ENCODE measurements at regions of chr17 and their contacts with region 1.

Region 1: DNA sequence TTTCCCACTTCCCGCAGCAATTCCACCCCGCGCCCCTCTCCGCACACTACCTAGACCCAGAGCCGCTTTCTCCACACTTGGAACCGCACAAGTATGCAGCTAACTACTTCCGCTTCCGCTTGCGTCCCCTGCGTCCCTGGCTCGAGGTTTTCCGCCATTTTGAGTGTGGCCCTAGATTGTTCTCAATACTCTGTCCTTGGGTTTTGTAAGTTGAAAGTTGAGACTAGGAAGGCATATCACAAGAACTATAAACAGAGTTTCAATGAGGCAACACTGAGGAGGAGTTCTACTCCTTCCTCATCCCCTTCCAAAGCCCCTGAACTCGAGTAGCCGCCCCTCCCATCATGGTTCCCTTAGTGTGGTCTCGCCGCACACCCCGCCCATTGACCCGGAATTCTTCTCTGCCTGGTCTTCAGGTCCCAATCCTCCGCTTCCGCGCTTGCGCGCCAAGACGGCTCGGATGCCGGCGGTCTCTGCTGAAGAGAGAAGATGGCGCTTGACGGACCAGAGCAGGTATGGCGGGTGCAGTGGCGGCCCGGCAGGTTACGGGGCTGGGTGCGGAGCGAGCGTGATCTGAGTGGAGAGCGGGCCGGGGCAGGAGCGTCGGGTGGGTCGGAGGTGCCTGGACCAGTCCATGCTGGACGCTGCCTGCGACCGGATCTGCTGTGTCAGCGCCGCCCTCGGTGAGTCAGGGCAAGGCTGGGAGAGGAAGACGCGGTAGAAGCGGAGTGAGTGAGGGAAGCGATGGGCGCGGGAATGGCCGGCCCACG is at the starts of genes FTSJ3 and PSMC5:
- DNase-seq: peak; percentile 93
- CTCF ChIP-seq: peak; percentile 72

Region 2: DNA sequence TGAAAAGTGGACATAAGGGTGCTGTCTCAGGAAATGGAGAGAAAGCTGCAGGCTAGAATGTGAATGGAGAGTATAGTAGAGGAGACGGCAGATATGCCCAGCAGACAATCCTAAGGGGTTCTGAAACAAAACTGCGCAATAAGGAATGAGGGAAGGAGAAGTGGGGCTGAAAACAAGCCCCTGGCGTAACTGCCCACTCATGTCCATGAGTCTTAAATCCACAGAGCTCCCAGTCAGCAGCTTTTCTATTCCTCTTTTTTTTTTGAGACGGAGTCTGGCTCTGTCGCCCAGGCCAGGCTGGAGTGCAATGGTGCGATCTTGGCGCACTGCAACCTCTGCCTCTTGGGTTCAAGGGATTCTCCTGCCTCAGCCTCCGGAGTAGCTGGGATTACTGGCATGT is 91.5 kb before region 1 on chr17:
- CTCF ChIA-PET with region 1: no interaction called
- POLR2A ChIA-PET with region 1: no interaction called
- DNase-seq: no peak
- CTCF ChIP-seq: no peak

Region 3: DNA sequence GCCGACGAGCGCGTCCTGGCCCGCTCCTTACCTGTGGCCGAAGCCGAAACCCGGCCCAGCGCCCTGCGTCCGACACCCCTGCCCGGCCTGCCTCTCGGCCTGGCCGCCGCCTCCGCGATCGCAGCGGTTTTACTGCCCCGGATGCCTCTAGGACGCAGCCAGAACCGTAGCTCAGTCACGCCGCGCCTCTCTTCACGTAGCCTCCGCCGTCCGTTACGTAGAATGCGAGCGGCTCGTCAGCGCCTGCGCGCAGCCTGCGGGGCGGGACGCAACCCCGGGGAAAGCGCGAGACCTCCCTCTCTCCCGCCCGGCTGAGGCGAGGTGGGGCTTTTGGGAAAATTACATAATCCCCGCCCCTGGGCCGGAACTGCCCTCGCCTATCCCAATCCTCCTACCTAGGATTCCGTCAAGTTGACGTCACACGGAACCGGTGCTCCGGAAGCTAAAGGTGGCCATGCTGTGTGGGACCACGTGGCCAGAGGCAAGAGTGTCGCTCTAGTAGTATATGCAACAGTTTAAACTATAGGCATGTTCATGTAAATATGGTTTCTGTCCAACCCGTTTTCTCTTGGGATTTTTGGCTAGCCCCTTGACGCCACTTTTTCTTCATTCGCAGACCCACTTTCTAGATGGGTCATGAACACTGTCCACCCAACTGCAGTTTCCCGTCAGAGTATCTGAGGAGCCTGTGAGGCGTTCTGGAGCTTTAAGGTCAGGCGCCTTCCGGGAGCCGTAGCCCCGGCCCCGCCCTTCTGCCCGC is 53.6 kb before region 1 on chr17 and contains the start of gene CCDC47:
- CTCF ChIA-PET with region 1: interaction called, 12 read pairs
- POLR2A ChIA-PET with region 1: interaction called, 4 read pairs
- DNase-seq: peak; percentile 99
- CTCF ChIP-seq: no peak

Region 4: GRCh38 chr17:63790057-63790456 is 37.1 kb before region 1 on chr17:
- CTCF ChIA-PET with region 1: interaction called, 3 read pairs
- POLR2A ChIA-PET with region 1: interaction called, 11 read pairs
- DNase-seq: no peak
- CTCF ChIP-seq: no peak

Region 5: DNA sequence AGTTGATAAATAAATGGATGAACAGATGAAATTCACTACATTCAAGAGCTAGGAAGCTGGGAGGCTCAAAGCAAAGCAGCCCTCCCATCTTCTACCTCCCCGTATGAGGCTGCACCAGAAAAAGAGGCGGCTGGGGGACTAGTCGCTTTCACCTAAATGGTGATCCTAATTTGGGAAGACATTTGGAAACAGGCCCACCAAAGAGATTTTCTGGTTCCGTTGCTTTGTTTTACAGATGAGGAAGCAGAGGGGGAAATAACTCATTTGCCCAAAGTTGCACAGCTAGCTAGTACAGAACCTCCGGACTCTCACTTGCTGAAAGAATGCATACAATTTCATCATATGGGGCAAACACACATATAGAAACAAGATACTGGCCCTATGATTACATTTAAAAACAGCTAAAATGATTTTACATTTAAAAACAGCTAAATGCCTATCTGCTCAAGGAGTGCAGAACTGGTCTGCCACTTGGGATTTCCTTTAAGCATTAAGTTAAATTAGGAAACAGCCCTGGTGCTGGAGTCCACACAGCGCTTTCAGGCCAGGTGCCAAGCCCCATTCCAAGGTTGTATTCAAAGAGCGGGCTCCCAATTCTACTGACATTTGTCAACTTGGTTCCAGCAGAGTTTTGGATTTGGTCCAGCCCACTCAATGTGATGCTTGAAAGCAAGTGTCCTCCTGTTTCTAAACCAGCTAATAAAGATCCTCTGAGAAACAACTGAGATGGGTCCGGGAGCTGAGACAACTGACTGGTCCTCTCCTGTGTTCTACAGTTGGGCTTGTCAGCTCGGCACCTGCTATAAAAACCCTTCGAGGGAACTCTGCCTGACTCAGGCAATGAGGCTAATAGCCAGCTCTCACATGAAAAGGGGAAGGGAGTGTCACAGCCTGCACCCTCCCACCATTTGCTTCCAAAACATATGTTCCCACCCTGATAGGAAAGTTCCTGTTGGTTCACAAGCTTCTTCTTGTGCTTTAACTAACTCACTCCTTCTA is 291.1 kb after region 1 on chr17:
- CTCF ChIA-PET with region 1: no interaction called
- POLR2A ChIA-PET with region 1: no interaction called
- DNase-seq: no peak
- CTCF ChIP-seq: no peak

Measured in GM10248 (cell line).